A549 (cell line): ENCODE measurements at regions of chr7 and their contacts with region 1.

Region 1: DNA sequence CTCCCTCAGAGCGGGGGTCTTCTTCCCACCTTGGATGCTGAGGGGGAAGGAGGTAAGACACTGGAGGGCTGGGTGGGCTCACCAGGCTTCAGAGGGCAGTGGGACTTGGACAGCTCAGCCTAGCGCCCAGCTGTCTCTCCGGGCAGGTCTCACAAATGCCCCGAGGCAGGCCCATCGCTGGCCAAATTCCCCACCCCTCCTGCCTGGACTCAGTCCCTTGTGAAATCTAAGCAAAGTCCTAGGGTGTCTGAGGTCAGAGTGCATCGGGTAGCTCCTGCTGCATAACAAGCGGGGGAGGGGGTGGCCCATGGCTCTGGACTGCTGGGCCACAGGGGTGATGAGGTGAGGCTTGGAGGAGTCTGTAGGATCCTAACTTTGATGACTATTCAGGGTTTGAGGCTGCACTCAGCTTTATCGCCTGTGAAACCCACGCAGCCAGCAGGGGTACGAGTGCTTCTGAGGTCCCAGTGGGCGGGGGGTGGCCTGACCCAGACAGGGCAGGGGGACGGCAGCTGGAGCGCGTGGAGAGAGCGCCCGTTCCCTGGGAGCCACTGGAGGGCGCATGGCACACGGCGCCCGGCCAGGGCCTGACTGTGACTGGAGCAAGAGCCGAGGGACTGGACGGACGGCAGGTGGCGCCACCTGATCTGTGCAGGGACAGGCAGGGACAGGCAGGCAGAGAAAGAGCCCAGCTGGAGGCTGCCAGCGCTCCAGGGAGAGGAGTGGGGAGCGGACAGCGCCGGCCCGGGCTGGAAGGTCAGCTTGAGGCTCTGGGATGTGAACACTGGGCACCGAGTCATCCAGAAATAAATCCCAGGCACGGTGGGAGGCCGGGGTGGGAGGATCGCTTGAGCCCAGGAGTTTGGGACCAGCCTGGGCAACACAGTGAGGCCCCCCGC is 10.0 kb downstream of the CYP2W1 start:
- DNase-seq: peak; percentile 69 to 97
- ATAC-seq: peak; percentile 91 to 97
- H3K4me3 ChIP-seq: no peak overlapping the region
- H3K27ac ChIP-seq: peak overlapping the region in 1 of 2 experiments; percentile 50; a peak in 1 of 6 replicates
- H3K4me1 ChIP-seq: peaks cover 17% of the 10 kb centered on the region
- CTCF ChIP-seq: peak; percentile 99
- EP300 ChIP-seq: no peak
- POLR2A ChIP-seq: no peak
- RAD21 ChIP-seq: peak; percentile 93 to 97

Region 2: DNA sequence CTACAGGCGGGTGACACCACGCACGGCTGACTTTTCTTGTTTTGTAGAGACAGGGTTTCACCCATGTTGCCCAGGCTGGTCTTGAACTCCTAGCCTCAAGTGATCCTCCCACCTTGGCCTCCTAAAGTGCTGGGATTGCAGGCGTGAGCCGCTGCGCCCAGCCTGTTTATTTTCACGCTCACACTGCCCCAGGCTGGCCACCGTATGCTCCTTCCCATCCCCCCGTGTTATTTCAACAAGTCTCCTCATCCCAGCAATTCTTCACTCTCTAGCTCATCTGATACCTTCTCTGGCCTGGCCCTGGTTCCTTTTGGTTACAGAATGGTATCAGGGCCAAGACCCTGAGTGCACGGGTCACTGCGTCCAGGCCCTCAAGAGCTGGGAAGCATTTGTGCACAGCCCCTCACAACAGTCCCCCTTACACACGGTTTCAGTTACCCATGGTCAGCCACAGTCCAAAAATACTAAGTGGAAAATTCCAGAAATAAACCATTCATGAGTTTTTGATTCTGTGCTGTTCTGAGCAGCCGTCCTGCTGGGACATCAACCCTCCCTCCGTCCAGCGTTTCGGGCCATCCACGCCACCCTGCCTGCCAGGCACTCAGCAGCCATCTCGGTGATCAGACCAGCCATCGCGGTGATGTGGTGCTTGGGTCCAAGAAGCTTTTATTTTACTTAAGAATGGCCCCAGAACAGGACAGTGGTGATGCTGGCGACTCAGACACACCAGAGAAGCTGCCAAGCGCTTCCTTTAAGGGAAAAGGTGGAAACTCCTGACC is 26.5 kb before region 1 on chr7:
- CTCF ChIA-PET with region 1: interaction called, 108 read pairs
- POLR2A ChIA-PET with region 1: no interaction called
- DNase-seq: no peak
- ATAC-seq: no peak
- H3K4me3 ChIP-seq: no peak overlapping the region
- H3K27ac ChIP-seq: no peak overlapping the region
- H3K4me1 ChIP-seq: no peaks in the 10 kb centered on the region
- CTCF ChIP-seq: no peak
- EP300 ChIP-seq: no peak
- POLR2A ChIP-seq: no peak
- RAD21 ChIP-seq: no peak

Region 3: GRCh38 chr7:1028031-1028770 is 35.2 kb after region 1 on chr7:
- CTCF ChIA-PET with region 1: interaction called, 138 read pairs
- POLR2A ChIA-PET with region 1: no interaction called
- DNase-seq: peak; percentile 87 to 88
- ATAC-seq: peak; percentile 83 to 89
- H3K4me3 ChIP-seq: peak overlapping the region; percentile 83
- H3K27ac ChIP-seq: peak overlapping the region; percentile 96 to 98
- H3K4me1 ChIP-seq: peaks cover 14% of the 10 kb centered on the region
- CTCF ChIP-seq: no peak
- EP300 ChIP-seq: no peak
- POLR2A ChIP-seq: peak; percentile 60
- RAD21 ChIP-seq: no peak

Region 4: DNA sequence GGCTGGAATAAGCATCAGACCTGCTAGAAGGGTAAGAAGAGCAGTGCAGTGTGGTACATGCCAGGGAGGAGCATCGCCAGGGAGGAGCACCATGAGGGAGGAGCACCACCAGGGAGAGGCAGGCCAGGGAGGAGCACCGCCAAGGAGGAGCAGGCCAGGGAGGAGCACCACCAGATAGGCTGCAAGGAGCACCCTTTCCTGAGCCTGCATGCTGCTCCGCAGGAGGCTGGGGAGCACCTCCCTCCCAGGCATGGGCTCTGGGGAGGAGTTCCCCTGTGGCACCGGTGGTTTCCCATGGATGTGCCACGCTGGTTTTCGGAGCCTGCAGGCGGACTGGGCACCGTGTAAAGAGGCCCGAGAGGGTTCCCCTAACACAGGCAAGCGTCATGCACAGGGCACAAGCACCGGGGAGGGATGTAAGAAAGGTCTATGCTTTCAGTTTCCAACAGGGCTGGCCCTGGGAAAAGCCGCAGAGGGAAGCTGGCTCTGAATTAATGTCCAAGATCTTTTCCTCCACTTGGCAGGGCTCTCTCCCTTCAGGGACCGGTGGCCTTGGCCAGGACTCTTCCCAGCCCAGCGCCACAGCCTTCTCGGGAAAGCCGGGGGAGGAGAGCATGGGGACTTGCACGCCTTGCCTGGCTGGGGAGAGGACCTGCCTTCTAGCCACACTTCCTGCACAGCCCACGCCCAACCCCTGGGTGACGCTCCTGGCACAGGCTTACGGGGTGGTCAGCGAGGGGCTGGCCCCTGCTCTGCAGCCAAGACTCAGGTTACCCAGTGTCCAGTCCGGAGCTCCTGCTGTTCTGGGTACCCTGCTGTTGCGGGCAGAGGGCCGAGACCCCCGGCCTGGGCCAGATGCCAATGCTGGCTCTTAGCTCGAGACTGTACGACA is 83.5 kb after region 1 on chr7:
- CTCF ChIA-PET with region 1: interaction called, 21 read pairs
- POLR2A ChIA-PET with region 1: no interaction called
- DNase-seq: no peak
- ATAC-seq: peak in 1 of 2 experiments; percentile 17; a peak in 1 of 6 replicates
- H3K4me3 ChIP-seq: no peak overlapping the region
- H3K27ac ChIP-seq: no peak overlapping the region
- H3K4me1 ChIP-seq: no peaks in the 10 kb centered on the region
- CTCF ChIP-seq: no peak
- EP300 ChIP-seq: no peak
- POLR2A ChIP-seq: no peak
- RAD21 ChIP-seq: no peak

Region 5: DNA sequence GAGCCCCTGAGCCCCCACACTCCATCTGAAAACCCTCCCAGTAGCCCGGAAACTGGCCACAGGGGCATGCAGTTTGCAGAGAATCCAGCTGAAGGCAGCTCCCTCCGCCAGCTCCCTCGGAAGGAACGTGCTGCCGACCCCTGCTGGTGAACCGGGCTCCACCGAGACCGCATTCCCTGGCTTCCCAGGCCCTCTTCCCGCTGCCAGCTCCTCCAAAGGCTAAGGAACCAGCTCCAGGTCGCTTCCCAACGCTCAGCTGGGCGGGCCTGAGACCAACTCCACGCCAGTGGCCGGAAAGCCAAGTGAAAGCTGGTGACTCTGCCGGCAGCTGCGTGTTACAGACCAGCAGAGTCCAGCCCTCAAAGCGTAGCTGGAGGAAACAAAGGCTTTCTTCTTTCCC is 130.8 kb after region 1 on chr7:
- CTCF ChIA-PET with region 1: interaction called, 19 read pairs
- POLR2A ChIA-PET with region 1: no interaction called
- DNase-seq: peak; percentile 12 to 53
- ATAC-seq: peak in 1 of 2 experiments; percentile 90; a peak in 3 of 6 replicates
- H3K4me3 ChIP-seq: no peak overlapping the region
- H3K27ac ChIP-seq: no peak overlapping the region
- H3K4me1 ChIP-seq: no peaks in the 10 kb centered on the region
- CTCF ChIP-seq: 0 out of 3 replicates have a peak, but pooled peaks have one; percentile 5
- EP300 ChIP-seq: no peak
- POLR2A ChIP-seq: no peak
- RAD21 ChIP-seq: no peak

Region 6: GRCh38 chr7:1193593-1194424 is 200.9 kb after region 1 on chr7:
- CTCF ChIA-PET with region 1: interaction called, 12 read pairs
- POLR2A ChIA-PET with region 1: no interaction called
- DNase-seq: peak; percentile 65 to 69
- ATAC-seq: peak; percentile 96 to 97
- H3K4me3 ChIP-seq: no peak overlapping the region
- H3K27ac ChIP-seq: no peak overlapping the region
- H3K4me1 ChIP-seq: no peaks in the 10 kb centered on the region
- CTCF ChIP-seq: peak; percentile 65
- EP300 ChIP-seq: no peak
- POLR2A ChIP-seq: no peak
- RAD21 ChIP-seq: peak; percentile 90 to 91